CD4-positive, alpha-beta memory T cell (primary cell): ENCODE measurements at regions of chr19 and their contacts with region 1.

Region 1: GRCh38 chr19:12333162-12334159 is at the start of gene ZNF563:
- DNase-seq: peak; percentile 96 to 98 (median 96)
- H3K4me3 ChIP-seq: peak within 1 kb of the TSS; percentile 74 to 82
- H3K4me3 Mint-ChIP-seq: peak within 1 kb of the TSS; percentile 96 to 100 (median 99)
- H3K27ac ChIP-seq: peak within 1 kb of the TSS; percentile 80
- H3K27ac Mint-ChIP-seq: peak within 1 kb of the TSS; percentile 83 to 99 (median 99)
- H3K4me1 ChIP-seq: peaks cover 27% of the 10 kb centered on the region
- H3K4me1 Mint-ChIP-seq: peaks cover 28 to 42% (median 37%) of the 10 kb centered on the region in 4 donors
- H3K27me3 ChIP-seq: no peaks in the 10 kb centered on the region
- H3K27me3 Mint-ChIP-seq: no peaks in the 10 kb centered on the region
- total RNA-seq, gene ZNF563: 15.0 to 15.6 TPM

Region 2: GRCh38 chr19:12162882-12163806 is 170.3 kb before region 1 on chr19 and contains the start of gene ZNF136:
- CTCF ChIA-PET with region 1: interaction called, 6 read pairs
- POLR2A ChIA-PET with region 1: interaction called, 33 read pairs
- intact Hi-C with region 1: loop called (anchors 1 kb)
- DNase-seq: peak; percentile 90 to 96 (median 92)
- H3K4me3 ChIP-seq: peak within 1 kb of the TSS; percentile 65 to 74
- H3K4me3 Mint-ChIP-seq: peak within 1 kb of the TSS; percentile 95 to 99 (median 98)
- H3K27ac ChIP-seq: peak within 1 kb of the TSS; percentile 98
- H3K27ac Mint-ChIP-seq: peak within 1 kb of the TSS; percentile 92 to 99 (median 99)
- H3K4me1 ChIP-seq: peaks cover 36% of the 10 kb centered on the region
- H3K4me1 Mint-ChIP-seq: peaks cover 32 to 56% (median 40%) of the 10 kb centered on the region in 4 donors
- H3K27me3 ChIP-seq: no peaks in the 10 kb centered on the region
- H3K27me3 Mint-ChIP-seq: no peaks in the 10 kb centered on the region
- total RNA-seq, gene ZNF136: 26.9 to 32.8 TPM

Region 3: DNA sequence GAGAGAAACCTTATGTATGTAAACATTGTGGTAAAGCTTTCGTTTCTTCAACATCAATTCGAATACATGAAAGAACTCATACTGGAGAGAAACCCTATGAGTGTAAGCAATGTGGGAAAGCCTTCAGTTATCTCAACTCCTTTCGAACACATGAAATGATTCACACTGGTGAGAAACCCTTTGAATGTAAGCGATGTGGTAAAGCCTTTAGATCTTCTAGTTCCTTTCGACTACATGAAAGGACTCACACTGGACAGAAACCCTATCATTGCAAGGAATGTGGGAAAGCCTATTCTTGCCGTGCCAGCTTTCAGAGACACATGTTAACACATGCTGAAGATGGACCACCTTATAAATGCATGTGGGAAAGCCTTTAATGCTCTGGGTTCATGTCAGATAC is 145.8 kb before region 1 on chr19:
- CTCF ChIA-PET with region 1: no interaction called
- POLR2A ChIA-PET with region 1: no interaction called
- intact Hi-C with region 1: no loop called
- DNase-seq: no peak
- H3K4me3 ChIP-seq: peak overlapping the region in 1 of 2 donors; percentile 26
- H3K4me3 Mint-ChIP-seq: no peak overlapping the region
- H3K27ac ChIP-seq: no peak overlapping the region
- H3K27ac Mint-ChIP-seq: peak overlapping the region in 1 of 7 donors; percentile 11
- H3K4me1 ChIP-seq: no peaks in the 10 kb centered on the region
- H3K4me1 Mint-ChIP-seq: peaks cover 0 to 5% (median 0%) of the 10 kb centered on the region in 4 donors
- H3K27me3 ChIP-seq: no peaks in the 10 kb centered on the region
- H3K27me3 Mint-ChIP-seq: no peaks in the 10 kb centered on the region

Region 4: GRCh38 chr19:12287958-12288500 is 45.4 kb before region 1 on chr19:
- CTCF ChIA-PET with region 1: no interaction called
- POLR2A ChIA-PET with region 1: interaction called, 148 read pairs
- intact Hi-C with region 1: loop called (anchors 1 kb)
- DNase-seq: no peak
- H3K4me3 ChIP-seq: no peak overlapping the region
- H3K4me3 Mint-ChIP-seq: peak overlapping the region in 3 of 8 donors; percentile 8 to 36 (median 13)
- H3K27ac ChIP-seq: peak overlapping the region; percentile 43
- H3K27ac Mint-ChIP-seq: peak overlapping the region; percentile 42 to 97 (median 81)
- H3K4me1 ChIP-seq: peaks cover 53% of the 10 kb centered on the region
- H3K4me1 Mint-ChIP-seq: peaks cover 33 to 63% (median 43%) of the 10 kb centered on the region in 4 donors
- H3K27me3 ChIP-seq: no peaks in the 10 kb centered on the region
- H3K27me3 Mint-ChIP-seq: no peaks in the 10 kb centered on the region

Region 5: GRCh38 chr19:12346896-12347295 is 13.4 kb after region 1 on chr19:
- CTCF ChIA-PET with region 1: interaction called, 3 read pairs
- POLR2A ChIA-PET with region 1: interaction called, 16 read pairs
- intact Hi-C with region 1: no loop called
- DNase-seq: peak in 4 of 5 donors; percentile 36 to 46 (median 42)
- H3K4me3 ChIP-seq: no peak overlapping the region
- H3K4me3 Mint-ChIP-seq: peak overlapping the region in 1 of 8 donors; percentile 3
- H3K27ac ChIP-seq: no peak overlapping the region
- H3K27ac Mint-ChIP-seq: no peak overlapping the region
- H3K4me1 ChIP-seq: no peaks in the 10 kb centered on the region
- H3K4me1 Mint-ChIP-seq: peaks cover 0 to 3% (median 0%) of the 10 kb centered on the region in 4 donors
- H3K27me3 ChIP-seq: no peaks in the 10 kb centered on the region
- H3K27me3 Mint-ChIP-seq: no peaks in the 10 kb centered on the region

Region 6: DNA sequence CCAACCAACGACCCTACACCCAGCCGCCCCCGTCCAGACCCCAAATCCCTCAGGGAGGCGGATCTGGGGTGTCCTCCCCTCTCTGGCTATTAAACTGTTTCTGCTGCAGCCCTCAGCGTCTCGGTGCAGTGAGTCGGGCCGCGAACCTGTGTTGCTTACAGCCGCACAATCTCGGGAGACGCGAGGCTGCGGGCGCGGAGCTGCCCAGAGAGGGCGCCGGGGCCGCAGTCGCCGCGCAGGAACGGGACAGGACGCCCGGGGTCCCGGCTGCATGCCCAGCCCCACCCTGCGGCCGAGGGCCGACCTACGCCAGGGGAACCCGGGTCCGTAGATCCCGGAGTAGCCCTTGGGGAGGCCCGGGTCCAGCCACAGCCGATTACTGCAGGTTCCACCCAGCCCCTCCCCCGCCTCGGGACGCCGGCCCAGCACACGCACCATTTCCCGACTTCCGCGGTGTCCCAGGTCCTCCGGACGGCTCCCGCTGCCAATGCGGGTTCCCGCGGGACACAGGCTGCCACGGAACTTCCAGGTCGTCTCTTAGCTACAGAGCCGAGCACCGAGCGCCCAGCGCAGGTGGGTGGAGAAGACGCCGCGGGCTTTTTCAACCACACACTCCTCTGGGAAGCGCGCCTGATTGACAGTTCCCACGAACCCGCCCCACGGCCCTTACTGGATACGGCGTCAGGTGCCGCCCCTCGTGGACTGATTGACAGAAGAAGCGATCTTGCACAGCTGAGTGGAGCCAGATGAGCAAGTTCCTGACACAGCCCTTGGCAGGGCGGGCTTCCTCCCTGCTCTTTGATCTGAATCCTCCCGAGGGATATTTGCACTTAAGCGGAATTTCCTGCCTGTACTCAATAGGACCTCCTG is 67.4 kb after region 1 on chr19 and contains the start of gene ZNF799:
- CTCF ChIA-PET with region 1: no interaction called
- POLR2A ChIA-PET with region 1: interaction called, 6 read pairs
- intact Hi-C with region 1: loop called (anchors 2 kb)
- DNase-seq: peak; percentile 76 to 83 (median 77)
- H3K4me3 ChIP-seq: peak within 1 kb of the TSS; percentile 64 to 81
- H3K4me3 Mint-ChIP-seq: peak within 1 kb of the TSS; percentile 95 to 96 (median 96)
- H3K27ac ChIP-seq: peak within 1 kb of the TSS; percentile 53
- H3K27ac Mint-ChIP-seq: peak within 1 kb of the TSS; percentile 83 to 95 (median 90)
- H3K4me1 ChIP-seq: peaks cover 6% of the 10 kb centered on the region
- H3K4me1 Mint-ChIP-seq: peaks cover 12 to 27% (median 21%) of the 10 kb centered on the region in 4 donors
- H3K27me3 ChIP-seq: no peaks in the 10 kb centered on the region
- H3K27me3 Mint-ChIP-seq: no peaks in the 10 kb centered on the region
- total RNA-seq, gene ZNF799: 10.1 to 10.3 TPM

Region 7: GRCh38 chr19:12495002-12495802 is 161.7 kb after region 1 on chr19:
- CTCF ChIA-PET with region 1: no interaction called
- POLR2A ChIA-PET with region 1: interaction called, 18 read pairs
- intact Hi-C with region 1: loop called (anchors 1 kb)
- DNase-seq: peak; percentile 86 to 94 (median 92)
- H3K4me3 ChIP-seq: peak overlapping the region; percentile 62 to 64
- H3K4me3 Mint-ChIP-seq: peak overlapping the region; percentile 87 to 98 (median 92)
- H3K27ac ChIP-seq: peak overlapping the region; percentile 51
- H3K27ac Mint-ChIP-seq: peak overlapping the region; percentile 89 to 97 (median 96)
- H3K4me1 ChIP-seq: peaks cover 5% of the 10 kb centered on the region
- H3K4me1 Mint-ChIP-seq: peaks cover 7 to 16% (median 11%) of the 10 kb centered on the region in 4 donors
- H3K27me3 ChIP-seq: no peaks in the 10 kb centered on the region
- H3K27me3 Mint-ChIP-seq: no peaks in the 10 kb centered on the region